ENCODE measurements at regions of chr12 and their contacts with region 1.

Region 1: GRCh38 chr12:27190765-27191517 is 53.1 kb upstream of the STK38L start:
- DNase-seq: no peak
- H3K4me3 ChIP-seq: no peak overlapping the region
- CTCF ChIP-seq: no peak

Region 2: GRCh38 chr12:27179400-27180214 is 11.3 kb before region 1 on chr12:
- CTCF ChIA-PET with region 1: interaction called, 16 read pairs
- POLR2A ChIA-PET with region 1: interaction called, 6 read pairs
- DNase-seq: peak; percentile 97
- H3K4me3 ChIP-seq: no peak overlapping the region
- CTCF ChIP-seq: no peak